ENCODE measurements at regions of chr2 and their contacts with region 1.

Region 1: GRCh38 chr2:106085181-106085940 is 108.7 kb downstream of the UXS1 start:
- DNase-seq: peak; percentile 84
- H3K4me3 Mint-ChIP-seq: peak overlapping the region; percentile 72
- H3K27ac Mint-ChIP-seq: peak overlapping the region; percentile 94
- H3K4me1 Mint-ChIP-seq: peaks cover 65% of the 10 kb centered on the region
- H3K27me3 Mint-ChIP-seq: no peaks in the 10 kb centered on the region

Region 2: GRCh38 chr2:105329561-105330495 is 755.5 kb before region 1 on chr2 and contains the start of gene TGFBRAP1:
- CTCF ChIA-PET with region 1: no interaction called
- intact Hi-C with region 1: loop called (anchors 5 kb)
- DNase-seq: peak; percentile 51
- H3K4me3 Mint-ChIP-seq: peak within 1 kb of the TSS; percentile 87
- H3K27ac Mint-ChIP-seq: peak within 1 kb of the TSS; percentile 93
- H3K4me1 Mint-ChIP-seq: peaks cover 37% of the 10 kb centered on the region
- H3K27me3 Mint-ChIP-seq: no peaks in the 10 kb centered on the region
- total RNA-seq, gene TGFBRAP1: 13.6 to 15.3 TPM

Region 3: DNA sequence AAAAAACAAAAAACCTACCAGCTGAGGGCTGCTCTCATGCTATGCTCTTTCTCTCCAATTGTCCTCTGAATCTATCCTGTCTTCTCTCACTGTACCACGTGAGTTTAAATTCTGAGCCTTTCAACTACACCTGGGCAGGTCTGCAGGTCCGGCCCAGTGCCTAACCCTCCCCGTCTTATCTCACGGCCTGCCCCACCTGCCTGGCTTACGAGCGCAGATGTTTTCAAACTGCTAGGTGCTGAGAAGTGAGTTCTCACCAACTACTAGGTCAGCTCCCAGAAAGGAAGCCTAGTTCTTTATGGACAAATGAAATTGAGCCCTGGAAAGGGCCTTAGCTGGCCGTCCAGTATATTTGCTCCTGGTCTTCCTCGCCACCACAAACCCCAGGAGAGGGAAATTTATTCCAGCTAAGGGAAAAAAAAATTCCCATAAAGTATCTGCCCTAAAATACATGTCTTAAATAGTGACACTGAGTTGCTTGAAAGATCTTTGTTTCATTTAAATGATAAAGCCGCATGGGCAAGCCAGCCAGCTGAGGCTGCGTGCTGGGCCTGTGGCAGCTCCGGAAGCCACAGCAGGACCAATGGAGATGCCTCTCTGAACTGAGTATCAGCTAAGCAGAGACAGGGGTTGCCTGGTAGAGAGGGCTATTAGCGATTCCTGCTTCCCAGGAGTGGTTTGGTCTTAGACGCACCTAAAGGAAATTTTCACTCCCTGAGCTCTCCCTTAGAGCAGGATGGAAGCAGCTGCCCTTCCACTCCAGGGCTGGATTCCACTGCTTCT is 433.2 kb before region 1 on chr2:
- CTCF ChIA-PET with region 1: interaction called, 5 read pairs
- intact Hi-C with region 1: loop called (anchors 5 kb)
- DNase-seq: no peak
- H3K4me3 Mint-ChIP-seq: no peak overlapping the region
- H3K27ac Mint-ChIP-seq: no peak overlapping the region
- H3K4me1 Mint-ChIP-seq: peaks cover 13% of the 10 kb centered on the region
- H3K27me3 Mint-ChIP-seq: no peaks in the 10 kb centered on the region

Region 4: DNA sequence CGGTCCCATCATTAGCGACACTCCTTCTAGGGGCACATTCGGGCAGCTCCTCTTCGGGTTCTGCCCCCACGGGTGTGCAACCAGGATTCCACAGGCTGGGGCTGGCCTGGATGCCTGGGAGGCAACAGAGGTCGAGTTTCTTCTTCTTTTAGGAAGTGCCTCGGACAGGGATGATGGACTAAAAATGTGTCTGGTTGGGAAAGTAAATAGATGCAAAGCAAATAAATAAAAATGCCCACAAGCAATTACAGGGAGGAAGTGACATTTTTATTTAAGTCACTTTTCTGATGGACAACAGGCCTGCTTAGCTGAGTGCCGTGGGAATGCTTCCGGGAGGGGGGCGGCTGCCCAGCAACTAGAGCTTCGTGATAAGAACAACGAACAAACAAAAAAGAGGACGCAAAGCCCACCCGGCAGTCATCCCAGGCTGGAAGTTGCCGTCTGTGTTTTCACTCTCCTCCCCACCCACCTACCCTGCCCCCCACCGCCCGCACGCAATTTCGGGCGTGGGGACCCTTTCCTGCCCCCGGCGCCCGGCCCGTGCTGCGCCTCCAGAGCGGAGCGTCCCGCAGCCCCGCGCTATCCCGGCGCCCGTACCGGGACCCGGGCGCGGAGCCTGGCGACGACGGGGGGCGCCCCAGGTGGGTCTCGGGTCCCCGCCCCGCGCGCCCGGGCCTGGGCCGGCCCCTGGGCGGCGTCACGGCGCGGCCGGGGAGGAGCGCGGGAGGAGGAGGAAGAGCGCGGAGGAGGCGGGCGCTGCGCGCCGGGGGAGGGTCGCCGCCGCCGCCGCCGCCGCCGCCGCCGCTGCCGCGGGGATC is 341.1 kb before region 1 on chr2:
- CTCF ChIA-PET with region 1: interaction called, 3 read pairs
- intact Hi-C with region 1: loop called (anchors 1 kb)
- DNase-seq: peak; percentile 63
- H3K4me3 Mint-ChIP-seq: peak overlapping the region; percentile 67
- H3K27ac Mint-ChIP-seq: peak overlapping the region; percentile 87
- H3K4me1 Mint-ChIP-seq: peaks cover 70% of the 10 kb centered on the region
- H3K27me3 Mint-ChIP-seq: no peaks in the 10 kb centered on the region

Region 5: GRCh38 chr2:105789745-105790460 is 295.5 kb before region 1 on chr2:
- CTCF ChIA-PET with region 1: interaction called, 3 read pairs
- intact Hi-C with region 1: loop called (anchors 1 kb)
- DNase-seq: peak; percentile 86
- H3K4me3 Mint-ChIP-seq: peak overlapping the region; percentile 65
- H3K27ac Mint-ChIP-seq: peak overlapping the region; percentile 88
- H3K4me1 Mint-ChIP-seq: peaks cover 94% of the 10 kb centered on the region
- H3K27me3 Mint-ChIP-seq: no peaks in the 10 kb centered on the region

Region 6: DNA sequence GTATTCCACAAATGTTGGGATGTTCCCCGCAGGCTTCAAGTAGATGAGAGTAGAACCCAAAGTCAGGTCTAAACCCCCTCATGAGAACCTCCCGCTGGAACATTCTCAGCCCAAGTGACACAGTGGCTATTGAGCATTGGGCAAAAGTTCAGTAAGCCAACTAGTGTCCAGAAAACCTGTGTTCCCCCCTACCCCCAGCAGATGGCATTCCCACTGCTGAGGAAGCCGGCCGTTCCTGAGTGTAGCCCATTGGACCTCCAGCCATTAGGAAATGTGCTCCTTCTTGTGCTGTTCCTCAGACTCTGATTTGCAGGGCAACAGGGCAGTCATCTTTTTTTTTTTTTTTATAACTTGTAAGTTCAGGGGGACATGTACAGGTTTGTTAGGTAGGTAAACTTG is 188.6 kb before region 1 on chr2:
- CTCF ChIA-PET with region 1: no interaction called
- intact Hi-C with region 1: loop called (anchors 10 kb)
- DNase-seq: no peak
- H3K4me3 Mint-ChIP-seq: no peak overlapping the region
- H3K27ac Mint-ChIP-seq: no peak overlapping the region
- H3K4me1 Mint-ChIP-seq: peaks cover 24% of the 10 kb centered on the region
- H3K27me3 Mint-ChIP-seq: no peaks in the 10 kb centered on the region

Region 7: DNA sequence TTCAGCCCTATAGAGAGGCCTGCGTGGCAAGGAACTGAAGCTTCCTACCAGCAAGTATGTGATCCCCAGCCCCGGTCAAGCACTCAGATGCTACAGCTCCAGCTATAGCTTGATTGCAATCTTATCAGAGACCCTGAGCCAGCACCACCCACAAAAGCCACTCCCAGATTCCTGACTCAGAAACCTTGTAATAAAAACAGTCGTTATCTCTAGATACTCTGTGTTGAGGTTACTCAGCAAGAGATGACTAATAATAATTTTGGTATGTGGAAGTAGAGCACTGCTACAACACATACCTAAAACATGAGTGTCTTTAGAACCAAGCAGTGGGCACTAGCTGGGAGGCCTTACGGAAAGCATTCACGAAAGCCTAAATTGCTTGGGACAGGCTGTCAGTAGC is 108.1 kb before region 1 on chr2:
- CTCF ChIA-PET with region 1: no interaction called
- intact Hi-C with region 1: loop called (anchors 2 kb)
- DNase-seq: peak; percentile 43
- H3K4me3 Mint-ChIP-seq: no peak overlapping the region
- H3K27ac Mint-ChIP-seq: peak overlapping the region; percentile 33
- H3K4me1 Mint-ChIP-seq: peaks cover 38% of the 10 kb centered on the region
- H3K27me3 Mint-ChIP-seq: no peaks in the 10 kb centered on the region